CD8-positive, alpha-beta T cell (primary cell): ENCODE measurements at regions of chr4 and their contacts with region 1.

Region 1: GRCh38 chr4:140252742-140253555 is 99.0 kb upstream of the MAML3 start:
- DNase-seq: peak; percentile 16 to 80 (median 64)
- ATAC-seq: peak; percentile 78
- H3K4me3 ChIP-seq: peak overlapping the region; percentile 53 to 58
- H3K4me3 Mint-ChIP-seq: peak overlapping the region; percentile 75
- H3K27ac ChIP-seq: peak overlapping the region in 1 of 2 experiments; percentile 25
- H3K27ac Mint-ChIP-seq: no peak overlapping the region
- H3K4me1 ChIP-seq: no peaks in the 10 kb centered on the region
- H3K4me1 Mint-ChIP-seq: peaks cover 10% of the 10 kb centered on the region
- H3K27me3 ChIP-seq: peaks cover 0 to 2% of the 10 kb centered on the region in 2 experiments
- H3K27me3 Mint-ChIP-seq: peaks cover 11% of the 10 kb centered on the region
- CTCF ChIP-seq: peak; percentile 91

Region 2: GRCh38 chr4:139506774-139507173 is 746.2 kb before region 1 on chr4:
- CTCF ChIA-PET with region 1: no interaction called
- POLR2A ChIA-PET with region 1: no interaction called
- intact Hi-C with region 1: no loop called
- DNase-seq: no peak
- ATAC-seq: no peak
- H3K4me3 ChIP-seq: no peak overlapping the region
- H3K4me3 Mint-ChIP-seq: no peak overlapping the region
- H3K27ac ChIP-seq: no peak overlapping the region
- H3K27ac Mint-ChIP-seq: no peak overlapping the region
- H3K4me1 ChIP-seq: no peaks in the 10 kb centered on the region
- H3K4me1 Mint-ChIP-seq: no peaks in the 10 kb centered on the region
- H3K27me3 ChIP-seq: no peaks in the 10 kb centered on the region
- H3K27me3 Mint-ChIP-seq: peaks cover 3% of the 10 kb centered on the region
- CTCF ChIP-seq: no peak

Region 3: DNA sequence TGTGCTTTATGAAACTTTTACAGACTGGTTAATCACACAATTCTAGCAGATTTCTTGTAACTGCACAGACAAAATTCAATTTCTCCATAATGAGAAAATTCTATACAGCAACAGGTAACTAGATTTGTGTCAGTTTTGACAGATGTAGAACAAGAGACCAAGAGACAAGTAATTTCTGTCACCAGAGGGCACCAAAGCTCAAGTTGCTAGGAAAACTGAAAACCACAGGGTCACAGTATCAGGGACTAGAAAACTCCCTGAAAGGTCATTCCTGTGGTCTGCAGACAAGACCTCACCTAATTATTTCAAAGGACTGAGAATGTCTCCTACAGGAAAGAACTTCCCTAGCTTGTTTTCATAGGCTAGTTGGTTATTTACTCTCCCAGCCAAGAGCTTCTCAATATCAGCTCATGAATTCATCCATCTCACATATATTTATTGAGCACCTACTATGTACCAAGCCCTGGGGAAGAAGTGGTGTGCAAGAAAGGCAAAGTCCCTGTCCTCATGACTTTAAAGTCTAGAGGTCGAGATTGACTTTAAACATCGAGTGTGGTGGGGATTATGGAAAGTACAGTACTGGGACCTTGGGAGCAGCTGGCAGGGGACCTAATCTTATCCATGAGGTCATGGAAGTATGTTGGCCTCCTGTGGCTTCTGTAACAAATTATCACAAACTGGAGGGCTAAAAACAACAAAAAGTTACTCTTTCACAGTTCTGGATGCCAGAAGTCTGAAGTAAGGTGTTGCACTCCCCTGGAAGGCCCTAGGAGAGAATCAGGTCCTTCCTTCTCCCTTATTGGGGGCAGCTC is 649.2 kb before region 1 on chr4:
- CTCF ChIA-PET with region 1: interaction called, 10 read pairs
- POLR2A ChIA-PET with region 1: no interaction called
- intact Hi-C with region 1: loop called (anchors 2 kb)
- DNase-seq: peak in 4 of 9 experiments; percentile 17 to 60 (median 42)
- ATAC-seq: peak; percentile 34
- H3K4me3 ChIP-seq: no peak overlapping the region
- H3K4me3 Mint-ChIP-seq: no peak overlapping the region
- H3K27ac ChIP-seq: no peak overlapping the region
- H3K27ac Mint-ChIP-seq: no peak overlapping the region
- H3K4me1 ChIP-seq: no peaks in the 10 kb centered on the region
- H3K4me1 Mint-ChIP-seq: peaks cover 19% of the 10 kb centered on the region
- H3K27me3 ChIP-seq: no peaks in the 10 kb centered on the region
- H3K27me3 Mint-ChIP-seq: peaks cover 24% of the 10 kb centered on the region
- CTCF ChIP-seq: peak; percentile 47

Region 4: GRCh38 chr4:139656614-139657486 is 596.1 kb before region 1 on chr4:
- CTCF ChIA-PET with region 1: no interaction called
- POLR2A ChIA-PET with region 1: no interaction called
- intact Hi-C with region 1: loop called in 1 of 2 experiments (anchors 5 kb)
- DNase-seq: peak in 8 of 9 experiments; percentile 16 to 69 (median 48)
- ATAC-seq: peak; percentile 84
- H3K4me3 ChIP-seq: no peak overlapping the region
- H3K4me3 Mint-ChIP-seq: no peak overlapping the region
- H3K27ac ChIP-seq: no peak overlapping the region
- H3K27ac Mint-ChIP-seq: no peak overlapping the region
- H3K4me1 ChIP-seq: peaks cover 5% of the 10 kb centered on the region
- H3K4me1 Mint-ChIP-seq: peaks cover 15% of the 10 kb centered on the region
- H3K27me3 ChIP-seq: no peaks in the 10 kb centered on the region
- H3K27me3 Mint-ChIP-seq: peaks cover 2% of the 10 kb centered on the region
- CTCF ChIP-seq: peak; percentile 74

Region 5: DNA sequence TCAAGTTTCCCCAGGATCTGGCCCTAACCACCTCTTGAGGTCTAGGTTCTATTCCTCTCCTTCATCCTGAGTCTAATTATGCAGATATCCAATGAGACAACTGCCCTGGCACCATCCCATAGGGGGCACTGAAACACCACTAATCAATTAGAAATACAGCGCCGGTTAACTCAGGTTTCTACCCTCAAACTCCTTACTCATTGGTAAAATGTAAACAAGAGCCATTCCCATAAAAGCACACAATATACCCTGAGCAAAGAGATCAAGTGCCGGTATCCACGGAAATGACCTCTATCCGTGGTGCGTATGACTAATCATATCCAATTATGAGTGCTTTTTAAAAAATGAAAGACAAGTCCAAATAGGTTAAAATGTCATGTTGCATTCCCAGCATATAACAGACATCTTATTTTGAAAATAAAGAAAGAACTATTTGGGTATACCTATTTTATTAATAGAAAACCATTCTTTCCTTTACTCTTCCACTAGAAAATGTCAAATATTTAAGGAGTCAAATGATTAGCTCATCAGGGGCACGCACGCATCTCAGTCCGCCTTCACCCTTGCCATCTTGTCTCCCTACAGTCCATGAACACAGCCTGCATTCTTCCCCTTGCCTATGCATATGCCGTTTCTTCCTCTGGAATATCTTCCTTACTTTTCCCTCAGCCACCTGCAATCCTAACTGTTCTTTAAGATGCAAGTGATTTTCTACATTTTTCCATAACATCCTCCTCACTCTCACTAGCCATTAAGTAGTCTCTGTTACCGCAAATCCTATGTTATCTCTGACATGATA is 240.1 kb before region 1 on chr4:
- CTCF ChIA-PET with region 1: interaction called, 100 read pairs
- POLR2A ChIA-PET with region 1: interaction called, 5 read pairs
- intact Hi-C with region 1: loop called (anchors 1 kb)
- DNase-seq: peak; percentile 31 to 77 (median 59)
- ATAC-seq: peak; percentile 96
- H3K4me3 ChIP-seq: no peak overlapping the region
- H3K4me3 Mint-ChIP-seq: no peak overlapping the region
- H3K27ac ChIP-seq: no peak overlapping the region
- H3K27ac Mint-ChIP-seq: no peak overlapping the region
- H3K4me1 ChIP-seq: no peaks in the 10 kb centered on the region
- H3K4me1 Mint-ChIP-seq: peaks cover 7% of the 10 kb centered on the region
- H3K27me3 ChIP-seq: no peaks in the 10 kb centered on the region
- H3K27me3 Mint-ChIP-seq: no peaks in the 10 kb centered on the region
- CTCF ChIP-seq: peak; percentile 81

Region 6: DNA sequence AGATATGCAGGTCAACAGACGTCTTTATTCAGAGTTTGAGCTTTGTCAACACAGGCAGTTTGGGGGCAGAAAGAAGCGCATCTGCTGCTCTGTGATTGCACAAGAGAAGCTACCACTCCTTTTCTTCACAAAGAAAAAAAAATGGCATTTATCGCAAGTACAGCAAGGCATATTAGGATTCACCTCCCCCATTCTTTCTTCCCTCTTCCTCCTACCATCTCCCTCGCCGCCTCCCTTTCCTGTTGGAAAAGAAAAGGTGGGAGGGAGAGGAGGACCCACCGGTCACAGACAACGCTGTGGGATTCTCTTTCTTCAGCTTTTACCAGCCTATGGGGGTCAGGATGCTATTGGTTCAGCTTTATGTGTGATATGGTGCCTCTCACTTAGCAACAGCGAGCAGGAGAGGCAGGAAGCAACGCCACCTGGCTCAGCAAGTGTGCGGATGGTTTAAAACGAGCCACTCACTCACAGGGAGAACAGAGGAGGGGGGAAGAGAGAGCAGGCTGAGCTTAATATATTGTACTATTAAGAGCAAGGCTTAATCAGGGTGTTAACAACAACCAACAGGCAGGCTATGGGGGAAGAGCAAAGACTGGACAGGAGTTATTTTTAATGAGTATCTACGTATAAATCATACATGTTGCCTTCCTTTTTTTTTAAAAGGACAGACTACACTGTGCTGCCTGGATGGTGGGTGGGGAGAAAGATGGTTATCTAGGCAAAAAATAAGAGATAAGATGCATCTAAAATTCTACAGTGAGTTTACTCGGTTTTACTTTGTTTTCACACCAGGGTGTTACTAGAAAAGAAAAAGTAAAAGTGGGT is 203.7 kb before region 1 on chr4:
- CTCF ChIA-PET with region 1: interaction called, 14 read pairs
- POLR2A ChIA-PET with region 1: no interaction called
- intact Hi-C with region 1: loop called in 1 of 2 experiments (anchors 2 kb)
- DNase-seq: peak; percentile 8 to 80 (median 58)
- ATAC-seq: peak; percentile 95
- H3K4me3 ChIP-seq: peak overlapping the region; percentile 13 to 55
- H3K4me3 Mint-ChIP-seq: peak overlapping the region; percentile 81
- H3K27ac ChIP-seq: peak overlapping the region; percentile 31 to 55
- H3K27ac Mint-ChIP-seq: peak overlapping the region; percentile 87
- H3K4me1 ChIP-seq: peaks cover 34% of the 10 kb centered on the region
- H3K4me1 Mint-ChIP-seq: peaks cover 49% of the 10 kb centered on the region
- H3K27me3 ChIP-seq: no peaks in the 10 kb centered on the region
- H3K27me3 Mint-ChIP-seq: no peaks in the 10 kb centered on the region
- CTCF ChIP-seq: no peak

Region 7: GRCh38 chr4:140116442-140117104 is 136.4 kb before region 1 on chr4:
- CTCF ChIA-PET with region 1: no interaction called
- POLR2A ChIA-PET with region 1: no interaction called
- intact Hi-C with region 1: no loop called
- DNase-seq: peak in 4 of 9 experiments; percentile 16 to 38 (median 24)
- ATAC-seq: peak; percentile 92
- H3K4me3 ChIP-seq: no peak overlapping the region
- H3K4me3 Mint-ChIP-seq: no peak overlapping the region
- H3K27ac ChIP-seq: no peak overlapping the region
- H3K27ac Mint-ChIP-seq: no peak overlapping the region
- H3K4me1 ChIP-seq: peaks cover 12% of the 10 kb centered on the region
- H3K4me1 Mint-ChIP-seq: peaks cover 20% of the 10 kb centered on the region
- H3K27me3 ChIP-seq: no peaks in the 10 kb centered on the region
- H3K27me3 Mint-ChIP-seq: no peaks in the 10 kb centered on the region
- CTCF ChIP-seq: no peak

Region 8: GRCh38 chr4:140359562-140360427 is 106.8 kb after region 1 on chr4:
- CTCF ChIA-PET with region 1: interaction called, 3 read pairs
- POLR2A ChIA-PET with region 1: no interaction called
- intact Hi-C with region 1: loop called in 1 of 2 experiments (anchors 2 kb)
- DNase-seq: peak; percentile 44 to 84 (median 78)
- ATAC-seq: peak; percentile 90
- H3K4me3 ChIP-seq: no peak overlapping the region
- H3K4me3 Mint-ChIP-seq: no peak overlapping the region
- H3K27ac ChIP-seq: no peak overlapping the region
- H3K27ac Mint-ChIP-seq: no peak overlapping the region
- H3K4me1 ChIP-seq: no peaks in the 10 kb centered on the region
- H3K4me1 Mint-ChIP-seq: no peaks in the 10 kb centered on the region
- H3K27me3 ChIP-seq: no peaks in the 10 kb centered on the region
- H3K27me3 Mint-ChIP-seq: no peaks in the 10 kb centered on the region
- CTCF ChIP-seq: peak; percentile 89